ENCODE measurements at regions of chr10 and their contacts with region 1.

Region 1: DNA sequence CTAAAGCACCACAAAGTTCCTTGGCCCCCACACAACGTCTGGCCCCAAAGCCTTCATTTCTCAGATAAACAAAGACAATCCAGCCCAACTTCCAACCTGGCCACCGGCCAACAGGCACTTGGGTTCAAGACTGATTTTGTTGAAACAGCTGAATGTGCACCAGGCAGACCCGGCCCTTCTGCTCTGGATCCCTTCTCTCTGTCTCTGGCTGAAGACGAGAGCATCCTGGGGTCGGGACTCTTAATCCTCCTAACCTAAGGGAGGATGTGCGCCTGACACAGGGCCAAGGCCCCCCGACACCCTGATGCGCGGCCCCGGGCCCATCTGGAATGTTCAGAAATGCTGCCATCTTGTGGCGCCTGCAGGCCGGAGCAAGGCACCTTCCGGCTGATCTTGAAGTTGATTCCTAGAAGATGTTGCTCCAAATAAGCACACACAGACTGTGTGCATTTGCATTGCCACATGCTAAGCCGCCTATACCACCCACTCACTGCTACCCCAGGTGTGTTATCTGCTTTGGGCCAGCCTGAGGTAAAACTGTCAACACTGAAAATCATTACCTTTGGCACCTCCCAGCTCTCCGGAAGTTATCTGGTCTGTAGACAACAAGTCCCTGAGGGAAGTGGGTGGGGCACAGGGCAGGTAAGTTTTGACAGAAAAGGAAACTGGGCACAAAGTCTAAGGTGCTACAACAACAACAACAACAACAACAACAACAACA is 98.4 kb upstream of the HABP2 start:
- DNase-seq: peak; percentile 31
- ATAC-seq: peak; percentile 93
- H3K4me3 ChIP-seq: peak overlapping the region in 1 of 2 experiments; percentile 10; a peak in 1 of 4 replicates
- H3K27ac ChIP-seq: no peak overlapping the region
- H3K4me1 ChIP-seq: peaks cover 0 to 6% of the 10 kb centered on the region in 2 experiments; a peak in 1 of 4 replicates
- H3K27me3 ChIP-seq: peaks cover 32% of the 10 kb centered on the region
- CTCF ChIP-seq: peak; percentile 58 to 98 (median 96); a peak in 5 of 6 replicates
- POLR2A ChIP-seq: no peak
- RAD21 ChIP-seq: peak; percentile 90

Region 2: DNA sequence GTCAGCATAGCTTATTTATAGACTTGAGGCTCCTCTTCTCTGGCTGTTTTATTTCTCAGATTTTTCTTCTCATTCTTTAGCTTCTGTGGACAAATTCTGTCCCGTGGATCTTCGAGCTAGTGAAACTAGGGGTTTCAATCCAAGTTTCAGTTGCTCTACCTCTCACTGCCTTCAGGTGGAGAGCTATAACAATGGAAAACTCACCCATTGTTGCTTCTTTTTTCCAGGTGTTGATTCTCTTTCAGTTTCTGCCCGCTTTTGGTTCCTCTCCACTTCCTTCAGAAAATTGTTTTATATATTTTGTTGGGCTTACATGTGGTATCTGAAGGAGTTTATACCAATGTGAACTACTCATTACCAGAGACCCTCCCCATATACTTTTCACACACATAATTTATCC is 238.4 kb before region 1 on chr10:
- CTCF ChIA-PET with region 1: interaction called, 9 read pairs
- POLR2A ChIA-PET with region 1: no interaction called
- RAD21 ChIA-PET with region 1: interaction called in 1 of 2 experiments, 4 read pairs
- intact Hi-C with region 1: loop called (anchors 1 kb)
- DNase-seq: peak; percentile 12
- ATAC-seq: no peak; the same call in 1 of the 2 replicates
- H3K4me3 ChIP-seq: no peak overlapping the region
- H3K27ac ChIP-seq: no peak overlapping the region
- H3K4me1 ChIP-seq: no peaks in the 10 kb centered on the region
- H3K27me3 ChIP-seq: no peaks in the 10 kb centered on the region
- CTCF ChIP-seq: peak; percentile 41 to 48 (median 47); a peak in 5 of 6 replicates
- POLR2A ChIP-seq: no peak
- RAD21 ChIP-seq: peak; percentile 70

Region 3: DNA sequence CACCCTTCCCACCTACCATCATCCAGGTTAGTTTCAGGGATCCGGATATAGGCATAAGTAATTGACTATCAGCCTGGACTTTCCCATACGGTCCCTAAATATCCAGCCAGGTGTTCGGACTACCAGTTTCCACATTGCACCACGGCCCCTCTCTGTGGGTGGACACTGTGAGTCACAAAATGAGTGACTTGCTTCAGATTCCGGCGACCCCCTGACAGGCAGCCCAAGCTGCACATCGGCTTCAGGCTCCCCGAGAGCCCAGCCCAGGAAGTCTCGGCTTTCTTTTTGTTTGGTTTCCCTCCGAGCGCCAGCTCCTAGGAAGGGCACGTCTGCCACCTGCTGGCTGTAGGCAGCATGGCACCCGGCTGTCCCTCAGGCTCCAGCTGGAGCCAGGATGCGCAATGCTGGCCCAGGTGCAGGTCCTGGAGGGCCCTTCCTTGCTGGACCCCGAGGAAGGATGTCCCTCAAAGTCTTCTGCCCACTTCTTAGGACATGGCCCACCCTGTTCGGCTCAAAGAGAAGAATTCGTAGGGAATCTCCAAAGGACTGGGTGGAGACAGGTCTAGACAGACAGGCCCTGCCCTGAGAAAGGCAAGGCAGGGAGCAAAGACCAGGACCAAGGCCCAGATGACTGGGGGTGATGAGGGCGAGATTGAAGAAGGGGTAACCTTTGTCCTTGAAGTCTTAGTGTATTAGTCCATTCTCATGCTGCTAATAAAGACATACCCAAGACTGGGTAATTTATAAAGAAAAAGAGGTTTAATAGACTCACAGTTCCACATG is 109.0 kb after region 1 on chr10:
- CTCF ChIA-PET with region 1: interaction called, 4 read pairs
- POLR2A ChIA-PET with region 1: no interaction called
- RAD21 ChIA-PET with region 1: no interaction called
- intact Hi-C with region 1: loop called (anchors 5 kb)
- DNase-seq: peak; percentile 52
- ATAC-seq: peak; percentile 97
- H3K4me3 ChIP-seq: peak overlapping the region; percentile 44 to 54
- H3K27ac ChIP-seq: no peak overlapping the region
- H3K4me1 ChIP-seq: peaks cover 5 to 6% of the 10 kb centered on the region in 2 experiments; a peak in 3 of 4 replicates
- H3K27me3 ChIP-seq: no peaks in the 10 kb centered on the region
- CTCF ChIP-seq: peak; percentile 89 to 100 (median 100)
- POLR2A ChIP-seq: no peak
- RAD21 ChIP-seq: peak; percentile 98